Caco-2 (cell line): ENCODE measurements at regions of chrX and their contacts with region 1.

Region 1: GRCh38 chrX:51641421-51642021 is 22.8 kb upstream of the CENPVL3 start:
- DNase-seq: peak; percentile 2 to 26
- H3K4me3 ChIP-seq: no peak overlapping the region
- H3K4me3 Mint-ChIP-seq: no peak overlapping the region
- H3K27ac Mint-ChIP-seq: no peak overlapping the region
- H3K4me1 ChIP-seq: peaks cover 8% of the 10 kb centered on the region; the same call in 1 of the 2 replicates
- H3K4me1 Mint-ChIP-seq: no peaks in the 10 kb centered on the region
- H3K27me3 ChIP-seq: no peaks in the 10 kb centered on the region
- H3K27me3 Mint-ChIP-seq: no peaks in the 10 kb centered on the region
- CTCF ChIP-seq: peak; percentile 21 to 33

Region 2: GRCh38 chrX:51779306-51779705 is 137.8 kb after region 1 on chrX:
- CTCF ChIA-PET with region 1: no interaction called
- POLR2A ChIA-PET with region 1: no interaction called
- intact Hi-C with region 1: no loop called
- DNase-seq: no peak
- H3K4me3 ChIP-seq: no peak overlapping the region
- H3K4me3 Mint-ChIP-seq: no peak overlapping the region
- H3K27ac Mint-ChIP-seq: no peak overlapping the region
- H3K4me1 ChIP-seq: no peaks in the 10 kb centered on the region
- H3K4me1 Mint-ChIP-seq: no peaks in the 10 kb centered on the region
- H3K27me3 ChIP-seq: no peaks in the 10 kb centered on the region
- H3K27me3 Mint-ChIP-seq: no peaks in the 10 kb centered on the region
- CTCF ChIP-seq: no peak

Region 3: DNA sequence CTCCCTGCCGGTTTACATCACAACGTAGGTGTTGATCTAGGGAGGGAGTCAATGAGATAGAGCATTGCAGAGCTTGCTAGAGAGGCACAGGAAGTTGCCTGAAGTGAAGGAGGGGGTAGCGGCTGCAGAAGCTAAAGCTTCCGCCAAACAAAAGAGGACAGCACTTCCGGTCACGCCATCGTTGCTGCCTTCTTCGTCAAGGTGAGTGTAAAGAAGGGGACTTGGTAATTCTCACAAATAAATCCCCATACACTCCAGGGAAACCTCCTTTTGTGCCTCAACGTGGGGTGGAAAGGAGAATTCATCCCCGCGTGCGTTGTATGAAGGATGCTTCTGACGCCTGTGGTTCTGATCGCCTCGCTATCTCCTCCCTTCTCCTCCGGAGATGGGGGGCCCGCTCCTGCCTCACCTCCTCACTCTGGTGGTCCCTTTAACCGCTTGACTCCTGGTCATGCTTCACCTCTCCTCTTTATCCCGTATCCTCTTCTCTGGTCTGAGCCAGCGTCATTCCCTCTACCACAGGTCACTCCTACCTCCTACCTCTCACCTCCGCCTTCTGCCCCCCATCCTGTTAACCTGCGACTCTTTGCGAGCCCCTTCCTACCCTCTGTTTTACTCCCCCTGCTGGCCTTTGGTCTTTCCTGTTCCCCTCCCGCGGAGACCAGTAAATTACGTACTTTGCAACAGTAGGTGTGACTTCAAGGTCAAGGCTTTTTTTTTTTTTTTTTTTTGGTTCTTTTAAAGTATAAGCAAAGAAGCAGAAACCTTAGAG is 161.6 kb after region 1 on chrX:
- CTCF ChIA-PET with region 1: no interaction called
- POLR2A ChIA-PET with region 1: no interaction called
- intact Hi-C with region 1: loop called (anchors 5 kb)
- DNase-seq: peak; percentile 55 to 64
- H3K4me3 ChIP-seq: peak overlapping the region; percentile 55
- H3K4me3 Mint-ChIP-seq: peak overlapping the region; percentile 97
- H3K27ac Mint-ChIP-seq: peak overlapping the region; percentile 89
- H3K4me1 ChIP-seq: no peaks in the 10 kb centered on the region
- H3K4me1 Mint-ChIP-seq: no peaks in the 10 kb centered on the region
- H3K27me3 ChIP-seq: no peaks in the 10 kb centered on the region
- H3K27me3 Mint-ChIP-seq: peaks cover 4% of the 10 kb centered on the region
- CTCF ChIP-seq: peak; percentile 20 to 25